OCI-LY7 (cell line): ENCODE measurements at regions of chr10 and their contacts with region 1.

Region 1: GRCh38 chr10:93904901-93905300 is 11.1 kb downstream of the SLC35G1 start:
- DNase-seq: no peak
- H3K4me3 ChIP-seq: no peak overlapping the region
- H3K27ac ChIP-seq: no peak overlapping the region
- H3K4me1 ChIP-seq: no peaks in the 10 kb centered on the region
- CTCF ChIP-seq: no peak

Region 2: DNA sequence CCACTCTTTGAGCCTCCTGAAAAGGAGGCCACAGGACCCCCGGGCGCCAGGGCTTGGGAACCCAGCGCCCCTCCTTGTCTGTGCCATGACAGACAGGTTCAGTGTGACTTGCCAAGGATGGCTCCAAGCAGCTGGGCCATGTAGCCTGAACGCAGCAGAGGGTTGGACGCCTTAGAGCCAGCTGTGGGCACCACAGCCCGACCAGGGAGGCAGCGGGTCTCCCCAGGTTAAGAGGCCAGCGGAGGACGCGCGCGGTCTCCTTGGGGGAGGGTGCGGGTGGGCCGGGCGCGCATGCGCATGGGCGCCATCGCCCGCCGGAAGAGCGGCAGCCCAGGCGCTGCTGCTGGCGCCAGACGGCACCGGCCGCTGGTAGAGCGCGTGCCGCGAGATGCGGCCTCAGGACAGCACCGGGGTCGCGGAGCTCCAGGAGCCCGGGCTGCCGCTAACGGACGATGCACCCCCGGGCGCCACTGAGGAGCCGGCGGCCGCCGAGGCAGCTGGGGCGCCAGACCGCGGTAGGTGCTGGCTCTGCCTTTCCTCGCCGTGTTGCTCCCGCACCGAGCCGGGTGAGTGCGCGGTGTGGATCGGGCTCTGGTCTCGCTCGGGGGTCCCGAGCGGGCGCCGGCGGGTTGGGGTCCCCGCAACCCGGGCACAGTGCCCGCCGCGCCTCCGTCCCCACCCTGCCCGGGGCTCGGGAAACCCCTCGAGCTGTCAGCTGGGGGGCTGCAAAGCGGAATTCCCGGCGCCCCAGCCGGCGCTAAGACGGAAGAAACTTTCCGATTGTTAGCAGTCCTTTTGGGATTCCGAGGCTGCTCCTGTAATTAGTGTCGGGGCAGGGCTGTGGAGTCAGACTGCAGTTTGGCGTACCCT is 11.0 kb before region 1 on chr10 and contains the start of gene SLC35G1:
- CTCF ChIA-PET with region 1: interaction called, 4 read pairs
- POLR2A ChIA-PET with region 1: interaction called, 11 read pairs
- intact Hi-C with region 1: no loop called
- DNase-seq: peak; percentile 87
- H3K4me3 ChIP-seq: peak within 1 kb of the TSS; percentile 73
- H3K27ac ChIP-seq: no peak within 1 kb of the TSS
- H3K4me1 ChIP-seq: peaks cover 15% of the 10 kb centered on the region
- CTCF ChIP-seq: 0 out of 2 replicates have a peak, but pooled peaks have one; percentile 17
- total RNA-seq, gene SLC35G1: 5.9 and 6.0 TPM in 2 replicates